Activated CD4-positive, alpha-beta T cell treated with anti-CD3 and anti-CD28 coated beads for 36 hours (primary cell): ENCODE measurements at regions of chr6 and their contacts with region 1.

Region 1: GRCh38 chr6:154606457-154606856 is 96.0 kb upstream of the CNKSR3 start:
- DNase-seq: peak; percentile 96
- ATAC-seq: peak; percentile 92
- H3K4me3 Mint-ChIP-seq: peak overlapping the region; percentile 13
- H3K27ac Mint-ChIP-seq: peak overlapping the region; percentile 84
- H3K4me1 Mint-ChIP-seq: peaks cover 45% of the 10 kb centered on the region
- H3K27me3 Mint-ChIP-seq: peaks cover 4% of the 10 kb centered on the region

Region 2: DNA sequence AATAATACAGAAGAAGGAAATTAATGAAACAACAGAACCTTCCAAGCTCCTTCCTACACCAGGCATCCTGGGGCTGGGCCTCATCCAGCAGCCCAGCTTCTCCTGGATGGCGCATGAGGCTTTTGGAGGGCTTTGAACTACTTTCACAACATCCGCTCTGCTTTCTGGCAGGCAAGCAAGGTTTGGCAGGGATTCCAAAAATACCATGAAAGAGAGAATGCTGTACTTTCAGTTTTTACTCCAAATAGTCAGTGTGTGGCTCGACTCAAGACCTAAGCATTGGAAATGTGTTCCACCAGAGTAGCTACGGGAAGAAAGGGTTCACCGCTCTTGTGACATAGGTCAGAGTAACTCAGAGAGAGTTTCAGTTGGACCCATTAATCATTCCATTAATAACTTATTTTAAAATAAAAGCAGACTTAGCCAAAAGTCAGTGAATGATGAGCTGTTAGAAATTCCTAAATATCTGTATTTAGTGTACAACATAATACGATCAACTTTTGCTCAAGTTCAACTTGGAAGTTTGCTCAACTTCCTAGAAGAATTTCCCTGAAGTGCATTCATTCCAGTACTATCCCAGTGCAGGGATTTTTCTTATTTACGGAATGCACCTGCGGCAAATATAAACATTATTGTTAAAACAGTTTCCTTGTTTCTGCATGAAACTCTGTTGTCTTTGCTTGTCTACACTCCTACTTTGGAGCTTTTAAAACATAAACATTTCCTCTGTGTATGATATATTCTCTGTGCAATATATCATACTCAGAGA is 441.9 kb before region 1 on chr6:
- CTCF ChIA-PET with region 1: interaction called, 3 read pairs
- POLR2A ChIA-PET with region 1: no interaction called
- intact Hi-C with region 1: loop called (anchors 5 to 10 kb)
- DNase-seq: no peak
- ATAC-seq: no peak
- H3K4me3 Mint-ChIP-seq: no peak overlapping the region
- H3K27ac Mint-ChIP-seq: peak overlapping the region; percentile 10
- H3K4me1 Mint-ChIP-seq: peaks cover 43% of the 10 kb centered on the region
- H3K27me3 Mint-ChIP-seq: no peaks in the 10 kb centered on the region

Region 3: GRCh38 chr6:154352898-154353585 is 253.4 kb before region 1 on chr6:
- CTCF ChIA-PET with region 1: no interaction called
- POLR2A ChIA-PET with region 1: no interaction called
- intact Hi-C with region 1: loop called (anchors 1 kb)
- DNase-seq: peak; percentile 78
- ATAC-seq: peak; percentile 85
- H3K4me3 Mint-ChIP-seq: no peak overlapping the region
- H3K27ac Mint-ChIP-seq: no peak overlapping the region
- H3K4me1 Mint-ChIP-seq: peaks cover 29% of the 10 kb centered on the region
- H3K27me3 Mint-ChIP-seq: peaks cover 35% of the 10 kb centered on the region

Region 4: DNA sequence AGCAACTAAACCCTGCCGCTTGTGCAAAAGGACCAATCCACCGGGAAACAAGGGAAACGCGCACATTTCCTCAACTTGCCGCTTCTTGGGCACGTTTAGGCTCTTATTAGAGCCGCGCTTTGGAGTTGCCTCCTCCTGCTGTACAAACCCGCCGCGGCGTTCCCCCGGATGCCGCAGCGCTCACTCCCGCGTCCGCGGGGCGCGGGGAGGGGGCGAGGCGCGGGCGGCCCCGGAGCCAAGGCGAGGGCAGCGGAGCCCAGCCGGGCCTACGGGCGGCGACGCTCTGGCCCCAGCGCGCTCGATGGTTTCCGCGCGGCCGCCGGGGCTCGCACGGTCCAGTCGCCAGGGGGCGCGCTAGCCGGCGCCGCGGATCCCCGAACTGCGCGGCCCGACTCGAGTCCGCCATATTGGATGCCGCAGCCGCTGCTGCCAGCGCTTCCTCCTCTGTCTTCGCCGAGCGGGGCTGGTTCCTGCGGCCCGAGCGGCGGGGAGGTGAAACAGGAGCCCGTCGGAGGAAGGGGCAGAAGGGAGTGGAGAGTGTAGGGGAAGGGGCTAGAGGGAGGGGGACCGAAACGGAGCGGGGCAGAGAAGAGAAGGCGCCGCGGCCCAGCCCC is 126.7 kb after region 1 on chr6 and contains the start of gene SCAF8:
- CTCF ChIA-PET with region 1: no interaction called
- POLR2A ChIA-PET with region 1: no interaction called
- intact Hi-C with region 1: loop called (anchors 5 kb)
- DNase-seq: peak; percentile 90
- ATAC-seq: peak; percentile 78
- H3K4me3 Mint-ChIP-seq: peak within 1 kb of the TSS; percentile 86
- H3K27ac Mint-ChIP-seq: peak within 1 kb of the TSS; percentile 94
- H3K4me1 Mint-ChIP-seq: peaks cover 42% of the 10 kb centered on the region
- H3K27me3 Mint-ChIP-seq: no peaks in the 10 kb centered on the region
- total RNA-seq, gene SCAF8: 33.9 to 44.5 TPM

Region 5: GRCh38 chr6:155223646-155224451 is 617.4 kb after region 1 on chr6:
- CTCF ChIA-PET with region 1: no interaction called
- POLR2A ChIA-PET with region 1: no interaction called
- intact Hi-C with region 1: loop called in 1 of 2 experiments (anchors 1 kb)
- DNase-seq: peak; percentile 79
- ATAC-seq: peak; percentile 99
- H3K4me3 Mint-ChIP-seq: peak overlapping the region; percentile 10
- H3K27ac Mint-ChIP-seq: peak overlapping the region; percentile 79
- H3K4me1 Mint-ChIP-seq: peaks cover 18% of the 10 kb centered on the region
- H3K27me3 Mint-ChIP-seq: peaks cover 3% of the 10 kb centered on the region